H1 (cell line): ENCODE measurements at regions of chr13 and their contacts with region 1.

Region 1: GRCh38 chr13:42847891-42848663 is 66.7 kb downstream of the FAM216B start:
- DNase-seq: no peak
- H3K4me3 ChIP-seq: no peak overlapping the region
- H3K27ac ChIP-seq: no peak overlapping the region
- H3K4me1 ChIP-seq: no peaks in the 10 kb centered on the region; a peak in 1 of 7 replicates
- H3K27me3 ChIP-seq: no peaks in the 10 kb centered on the region
- CTCF ChIP-seq: no peak
- EP300 ChIP-seq: no peak
- POLR2A ChIP-seq: peak in 1 of 2 experiments; percentile 43; a peak in 1 of 3 replicates
- RAD21 ChIP-seq: no peak

Region 2: DNA sequence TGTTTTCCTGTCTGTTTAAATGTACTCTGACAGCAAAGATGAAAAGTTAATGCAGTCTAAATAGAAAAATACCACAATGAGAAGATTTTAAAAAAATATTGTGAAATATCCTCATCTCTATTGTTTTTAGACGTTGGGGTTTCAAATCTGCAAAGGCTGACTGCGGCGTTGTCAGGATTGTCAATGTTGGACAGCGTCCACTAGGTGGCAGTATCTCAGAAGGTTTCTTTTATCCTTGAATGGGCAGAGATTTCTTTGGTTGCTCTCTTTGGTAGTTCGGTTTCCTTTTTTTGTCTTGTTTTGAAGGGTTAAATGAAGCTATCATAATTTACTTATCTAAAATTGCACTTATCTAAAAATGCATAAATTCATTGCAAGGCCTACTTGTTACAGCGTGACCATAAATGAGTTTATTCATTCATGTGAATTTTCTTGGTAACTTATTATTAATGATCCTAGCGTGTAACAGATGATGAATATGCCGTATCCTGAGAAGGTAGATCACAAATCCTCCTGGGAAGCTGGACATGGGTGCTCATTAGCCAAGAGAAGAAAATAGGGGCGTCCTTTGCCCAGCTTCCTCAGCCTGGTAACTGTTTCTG is 253.0 kb before region 1 on chr13:
- CTCF ChIA-PET with region 1: interaction called, 4 read pairs
- POLR2A ChIA-PET with region 1: interaction called, 21 read pairs
- DNase-seq: no peak
- H3K4me3 ChIP-seq: no peak overlapping the region
- H3K27ac ChIP-seq: no peak overlapping the region
- H3K4me1 ChIP-seq: peaks cover 3 to 28% (median 22%) of the 10 kb centered on the region in 4 experiments
- H3K27me3 ChIP-seq: no peaks in the 10 kb centered on the region
- CTCF ChIP-seq: peak; percentile 43 to 81 (median 64)
- EP300 ChIP-seq: no peak
- POLR2A ChIP-seq: no peak
- RAD21 ChIP-seq: peak; percentile 83 to 91

Region 3: DNA sequence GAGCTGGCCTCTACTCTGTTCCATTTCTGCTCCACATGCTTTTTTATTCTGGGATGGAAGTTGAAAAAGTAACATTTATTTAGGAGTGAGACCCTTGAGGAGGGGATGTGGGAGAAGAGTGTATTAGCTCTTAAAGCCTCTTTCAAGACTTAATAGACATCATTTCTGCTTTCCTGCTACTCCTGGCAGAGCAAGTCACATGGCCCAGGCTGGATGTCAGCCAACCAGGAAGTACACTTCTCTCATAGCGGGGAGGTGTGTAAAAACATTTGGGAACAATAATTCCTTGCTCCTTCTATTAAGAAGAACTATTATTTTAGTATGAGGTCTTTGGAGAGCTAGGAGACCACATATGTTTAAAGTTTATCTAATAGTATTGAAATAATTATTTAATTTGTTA is 107.3 kb before region 1 on chr13:
- CTCF ChIA-PET with region 1: no interaction called
- POLR2A ChIA-PET with region 1: no interaction called
- DNase-seq: no peak
- H3K4me3 ChIP-seq: no peak overlapping the region
- H3K27ac ChIP-seq: no peak overlapping the region
- H3K4me1 ChIP-seq: no peaks in the 10 kb centered on the region
- H3K27me3 ChIP-seq: no peaks in the 10 kb centered on the region
- CTCF ChIP-seq: no peak
- EP300 ChIP-seq: no peak
- POLR2A ChIP-seq: no peak
- RAD21 ChIP-seq: no peak

Region 4: DNA sequence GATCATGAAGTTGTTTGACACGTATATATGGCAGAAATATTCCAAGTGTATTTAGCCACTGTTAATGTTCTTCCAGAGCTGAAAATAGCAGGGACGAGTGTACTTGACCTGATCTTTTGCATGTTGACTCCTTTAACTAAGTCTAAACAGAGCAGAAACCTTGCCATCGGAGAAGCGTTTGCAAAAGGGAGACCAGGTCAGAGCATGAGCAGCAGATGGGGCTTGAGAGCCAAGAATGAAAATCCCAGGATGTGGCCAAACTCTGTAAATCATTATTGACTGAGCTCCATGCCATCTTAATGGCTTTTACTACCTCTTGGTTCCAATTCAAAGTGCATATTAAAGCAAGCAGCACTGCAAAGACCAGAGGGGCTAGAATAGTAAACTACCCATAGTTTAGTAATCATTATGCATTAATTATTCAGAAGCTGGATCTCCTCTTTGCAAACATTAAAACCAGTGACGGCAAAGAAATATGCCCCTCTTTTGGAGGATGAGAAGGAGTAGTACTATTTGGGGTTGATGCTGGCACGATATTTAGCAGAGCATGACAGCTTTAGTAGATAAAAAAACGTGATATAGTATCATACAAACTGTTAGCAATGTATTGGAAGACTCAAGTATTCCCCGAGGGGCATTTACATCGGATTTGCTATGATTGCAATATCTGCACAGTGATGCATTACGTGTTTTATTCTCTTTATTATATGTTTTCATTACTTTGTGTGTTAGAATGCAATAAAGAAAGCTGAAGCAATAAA is 11.0 kb before region 1 on chr13:
- CTCF ChIA-PET with region 1: interaction called, 3 read pairs
- POLR2A ChIA-PET with region 1: interaction called, 41 read pairs
- DNase-seq: peak in 1 of 2 experiments; percentile 5
- H3K4me3 ChIP-seq: no peak overlapping the region
- H3K27ac ChIP-seq: no peak overlapping the region
- H3K4me1 ChIP-seq: no peaks in the 10 kb centered on the region
- H3K27me3 ChIP-seq: peaks cover 0 to 2% (median 0%) of the 10 kb centered on the region in 4 experiments; a peak in 1 of 7 replicates
- CTCF ChIP-seq: peak in 2 of 3 experiments; percentile 47 to 49; a peak in 2 of 4 replicates
- EP300 ChIP-seq: no peak
- POLR2A ChIP-seq: no peak
- RAD21 ChIP-seq: peak; percentile 64 to 72

Region 5: GRCh38 chr13:42859760-42860159 is 11.7 kb after region 1 on chr13:
- CTCF ChIA-PET with region 1: no interaction called
- POLR2A ChIA-PET with region 1: interaction called, 65 read pairs
- DNase-seq: no peak
- H3K4me3 ChIP-seq: no peak overlapping the region
- H3K27ac ChIP-seq: no peak overlapping the region
- H3K4me1 ChIP-seq: peaks cover 0 to 3% (median 0%) of the 10 kb centered on the region in 4 experiments; a peak in 2 of 7 replicates
- H3K27me3 ChIP-seq: no peaks in the 10 kb centered on the region
- CTCF ChIP-seq: no peak
- EP300 ChIP-seq: no peak
- POLR2A ChIP-seq: no peak
- RAD21 ChIP-seq: no peak

Region 6: GRCh38 chr13:42865768-42866102 is 17.7 kb after region 1 on chr13:
- CTCF ChIA-PET with region 1: no interaction called
- POLR2A ChIA-PET with region 1: interaction called, 65 read pairs
- DNase-seq: no peak
- H3K4me3 ChIP-seq: no peak overlapping the region
- H3K27ac ChIP-seq: no peak overlapping the region
- H3K4me1 ChIP-seq: peaks cover 0 to 3% (median 0%) of the 10 kb centered on the region in 4 experiments; a peak in 4 of 7 replicates
- H3K27me3 ChIP-seq: no peaks in the 10 kb centered on the region
- CTCF ChIP-seq: no peak
- EP300 ChIP-seq: no peak
- POLR2A ChIP-seq: no peak
- RAD21 ChIP-seq: no peak